Heart right ventricle (tissue), 16 donors: ENCODE measurements at regions of chr17 and their contacts with region 1.

Region 1: GRCh38 chr17:5237541-5238016 is 2.9 kb upstream of the SCIMP start:
- DNase-seq: peak in 1 of 2 donors; percentile 30
- ATAC-seq: peak in 4 of 8 donors; percentile 45 to 52 (median 49)
- H3K4me3 ChIP-seq: no peak overlapping the region
- H3K27ac ChIP-seq: peak overlapping the region in 1 of 10 donors; percentile 18
- H3K4me1 ChIP-seq: peaks cover 0 to 15% (median 6%) of the 10 kb centered on the region in 9 donors
- H3K27me3 ChIP-seq: no peaks in the 10 kb centered on the region
- CTCF ChIP-seq: peak in 8 of 9 donors; percentile 22 to 73 (median 45)

Region 2: GRCh38 chr17:5198472-5198871 is 39.1 kb before region 1 on chr17:
- intact Hi-C with region 1: loop called in 1 of 10 experiments (anchors 5 kb)
- DNase-seq: no peak
- ATAC-seq: no peak
- H3K4me3 ChIP-seq: no peak overlapping the region
- H3K27ac ChIP-seq: no peak overlapping the region
- H3K4me1 ChIP-seq: peaks cover 0 to 2% (median 0%) of the 10 kb centered on the region in 9 donors
- H3K27me3 ChIP-seq: no peaks in the 10 kb centered on the region
- CTCF ChIP-seq: no peak

Region 3: DNA sequence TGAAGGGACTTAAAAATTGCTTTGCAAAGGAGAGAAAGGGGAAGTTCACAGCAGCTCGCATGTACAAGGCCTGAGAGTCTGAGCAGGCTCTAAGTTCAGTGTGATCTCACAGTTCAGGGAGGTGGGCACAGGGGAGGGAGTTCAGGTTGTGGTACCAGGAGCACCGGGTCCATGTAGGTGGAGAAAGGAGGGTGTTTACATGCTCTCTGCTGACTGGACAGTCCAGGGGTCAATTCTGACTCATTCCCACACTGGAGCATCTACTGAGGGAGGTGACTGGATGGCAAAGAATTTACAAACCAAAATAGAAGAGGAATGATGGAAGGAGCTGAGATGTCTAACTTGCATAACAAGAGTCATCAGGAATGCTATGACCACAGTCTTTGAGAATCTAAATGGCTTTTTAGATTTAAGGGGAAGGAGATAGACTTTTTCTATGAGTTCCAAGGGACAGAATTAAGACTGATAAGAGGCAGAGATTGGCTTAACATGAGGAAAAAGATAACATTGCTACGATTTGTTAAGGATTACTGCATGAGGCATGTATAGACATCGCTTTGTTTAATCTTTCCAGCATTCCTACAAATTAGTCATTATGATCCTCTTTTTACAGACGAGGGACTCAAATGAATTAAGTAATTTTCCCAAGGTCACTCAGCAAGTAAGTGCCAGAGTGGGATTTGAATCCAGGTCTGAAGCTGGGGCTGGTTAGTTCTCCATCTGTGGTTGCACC is 278.6 kb after region 1 on chr17:
- intact Hi-C with region 1: no loop called
- DNase-seq: no peak
- ATAC-seq: no peak
- H3K4me3 ChIP-seq: no peak overlapping the region
- H3K27ac ChIP-seq: no peak overlapping the region
- H3K4me1 ChIP-seq: no peaks in the 10 kb centered on the region
- H3K27me3 ChIP-seq: no peaks in the 10 kb centered on the region
- CTCF ChIP-seq: no peak

Region 4: GRCh38 chr17:5986644-5987043 is 749.1 kb after region 1 on chr17:
- intact Hi-C with region 1: no loop called
- DNase-seq: no peak
- ATAC-seq: no peak
- H3K4me3 ChIP-seq: no peak overlapping the region
- H3K27ac ChIP-seq: no peak overlapping the region
- H3K4me1 ChIP-seq: no peaks in the 10 kb centered on the region
- H3K27me3 ChIP-seq: no peaks in the 10 kb centered on the region
- CTCF ChIP-seq: no peak

Region 5: GRCh38 chr17:6098050-6098822 is 860.7 kb after region 1 on chr17:
- intact Hi-C with region 1: no loop called
- DNase-seq: peak in 1 of 2 donors; percentile 63
- ATAC-seq: peak; percentile 81 to 97 (median 91)
- H3K4me3 ChIP-seq: no peak overlapping the region
- H3K27ac ChIP-seq: peak overlapping the region; percentile 34 to 87 (median 72)
- H3K4me1 ChIP-seq: peaks cover 0 to 31% (median 11%) of the 10 kb centered on the region in 9 donors
- H3K27me3 ChIP-seq: no peaks in the 10 kb centered on the region
- CTCF ChIP-seq: no peak